ENCODE measurements at regions of chr4 and their contacts with region 1.

Region 1: GRCh38 chr4:13511101-13511500 is 27.0 kb upstream of the RAB28 start:
- DNase-seq: no peak
- H3K4me3 Mint-ChIP-seq: no peak overlapping the region
- H3K27ac Mint-ChIP-seq: no peak overlapping the region
- H3K4me1 Mint-ChIP-seq: no peaks in the 10 kb centered on the region
- H3K27me3 Mint-ChIP-seq: peaks cover 22% of the 10 kb centered on the region

Region 2: GRCh38 chr4:13427599-13428325 is 83.3 kb before region 1 on chr4:
- CTCF ChIA-PET with region 1: no interaction called
- POLR2A ChIA-PET with region 1: no interaction called
- DNase-seq: no peak
- H3K4me3 Mint-ChIP-seq: no peak overlapping the region
- H3K27ac Mint-ChIP-seq: no peak overlapping the region
- H3K4me1 Mint-ChIP-seq: no peaks in the 10 kb centered on the region
- H3K27me3 Mint-ChIP-seq: no peaks in the 10 kb centered on the region

Region 3: DNA sequence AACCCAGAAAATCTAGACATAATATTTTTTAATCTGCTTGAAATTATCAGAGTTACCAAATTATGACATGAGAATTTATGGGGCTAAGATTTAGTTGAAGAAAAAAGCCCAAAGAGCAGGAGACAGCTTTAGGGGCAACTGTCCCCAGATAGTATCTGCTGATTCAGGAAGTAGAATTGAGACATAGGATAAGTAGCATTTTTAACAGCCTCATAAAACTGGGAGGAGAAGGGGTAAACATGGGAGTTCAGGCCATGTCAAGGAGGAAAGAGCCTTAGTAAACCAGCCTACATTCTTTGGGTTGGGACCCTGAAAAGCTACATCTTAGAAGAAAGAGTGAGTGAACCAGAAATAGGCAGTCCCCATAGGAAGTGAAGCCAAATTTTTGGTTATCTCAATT is 17.3 kb before region 1 on chr4:
- CTCF ChIA-PET with region 1: no interaction called
- POLR2A ChIA-PET with region 1: interaction called, 11 read pairs
- DNase-seq: no peak
- H3K4me3 Mint-ChIP-seq: no peak overlapping the region
- H3K27ac Mint-ChIP-seq: no peak overlapping the region
- H3K4me1 Mint-ChIP-seq: no peaks in the 10 kb centered on the region
- H3K27me3 Mint-ChIP-seq: peaks cover 24% of the 10 kb centered on the region

Region 4: GRCh38 chr4:13535708-13536361 is 24.7 kb after region 1 on chr4:
- CTCF ChIA-PET with region 1: no interaction called
- POLR2A ChIA-PET with region 1: no interaction called
- DNase-seq: no peak
- H3K4me3 Mint-ChIP-seq: peak overlapping the region; percentile 3
- H3K27ac Mint-ChIP-seq: peak overlapping the region; percentile 72
- H3K4me1 Mint-ChIP-seq: peaks cover 9% of the 10 kb centered on the region
- H3K27me3 Mint-ChIP-seq: peaks cover 92% of the 10 kb centered on the region

Region 5: DNA sequence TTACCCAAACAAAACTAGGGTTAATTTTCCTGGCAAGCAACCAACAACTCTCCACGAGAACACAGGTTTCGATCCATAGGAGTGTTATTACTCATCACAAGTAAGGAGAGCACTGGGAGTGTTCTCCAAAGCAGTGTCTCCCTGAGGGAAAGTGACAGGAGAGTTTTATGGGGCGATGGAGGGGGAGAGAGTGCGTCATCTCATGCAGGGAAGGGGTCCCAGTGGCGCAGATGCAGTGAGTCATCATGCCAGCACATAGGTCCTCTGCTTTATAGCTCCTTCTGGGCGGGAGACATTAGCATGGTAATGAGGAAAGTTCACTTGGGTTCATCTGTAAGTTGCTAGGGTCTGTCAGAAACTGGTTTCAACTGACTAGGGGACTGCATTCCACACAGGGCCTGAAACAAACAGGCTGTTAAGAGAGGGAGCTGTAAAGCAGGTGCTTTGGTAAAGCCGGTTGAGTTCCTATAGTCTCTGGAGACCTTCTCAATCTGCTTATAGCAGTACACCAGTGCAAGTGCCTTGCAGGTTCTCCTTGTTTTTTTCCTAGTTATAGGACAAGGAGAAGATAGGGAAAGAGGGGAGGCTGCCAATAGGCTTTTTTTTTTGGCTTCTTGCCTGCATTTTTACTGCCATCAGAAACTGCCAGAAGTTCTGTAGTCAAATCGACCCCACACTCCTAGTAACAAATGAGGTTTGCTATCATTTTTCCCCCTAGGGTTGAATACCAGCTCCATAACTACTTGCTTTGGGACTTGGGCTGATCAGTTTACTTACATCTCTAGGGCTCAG is 129.2 kb after region 1 on chr4:
- CTCF ChIA-PET with region 1: no interaction called
- POLR2A ChIA-PET with region 1: no interaction called
- DNase-seq: no peak
- H3K4me3 Mint-ChIP-seq: no peak overlapping the region
- H3K27ac Mint-ChIP-seq: no peak overlapping the region
- H3K4me1 Mint-ChIP-seq: no peaks in the 10 kb centered on the region
- H3K27me3 Mint-ChIP-seq: peaks cover 34% of the 10 kb centered on the region

Measured in activated CD4-positive, alpha-beta T cell treated with anti-CD3 and anti-CD28 coated beads, Interleukin-2, amount 10 ng/mL, durations not matched to agents 7 days and 5 days (primary cell).